Natural killer cell (primary cell): ENCODE measurements at regions of chr13 and their contacts with region 1.

Region 1: DNA sequence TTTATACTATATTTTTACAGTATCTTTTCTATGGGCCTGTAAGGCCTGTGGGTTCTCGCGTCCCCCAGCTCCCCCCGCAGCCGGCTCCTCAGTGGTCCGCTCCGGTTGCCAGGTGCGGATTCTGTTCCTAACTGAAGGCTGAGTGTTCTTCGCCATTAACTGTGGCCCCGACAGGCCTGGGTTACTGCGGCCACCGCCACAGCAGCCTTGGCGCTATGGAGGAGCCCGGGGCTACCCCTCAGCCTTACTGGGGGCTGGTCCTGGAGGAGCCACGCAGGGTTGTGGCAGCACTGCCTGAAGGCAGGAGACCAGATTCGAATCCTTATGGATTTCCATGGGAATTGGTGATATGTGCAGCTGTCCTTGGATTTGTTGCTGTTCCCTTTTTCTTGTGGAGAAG is 45.8 kb downstream of the SPRYD7 start:
- DNase-seq: no peak
- ATAC-seq: no peak
- H3K4me3 ChIP-seq: no peak overlapping the region
- H3K4me3 Mint-ChIP-seq: no peak overlapping the region
- H3K27ac ChIP-seq: no peak overlapping the region
- H3K27ac Mint-ChIP-seq: no peak overlapping the region
- H3K4me1 ChIP-seq: no peaks in the 10 kb centered on the region
- H3K4me1 Mint-ChIP-seq: no peaks in the 10 kb centered on the region
- H3K27me3 ChIP-seq: no peaks in the 10 kb centered on the region
- H3K27me3 Mint-ChIP-seq: peaks cover 0 to 4% of the 10 kb centered on the region in 2 donors
- CTCF ChIP-seq: no peak

Region 2: DNA sequence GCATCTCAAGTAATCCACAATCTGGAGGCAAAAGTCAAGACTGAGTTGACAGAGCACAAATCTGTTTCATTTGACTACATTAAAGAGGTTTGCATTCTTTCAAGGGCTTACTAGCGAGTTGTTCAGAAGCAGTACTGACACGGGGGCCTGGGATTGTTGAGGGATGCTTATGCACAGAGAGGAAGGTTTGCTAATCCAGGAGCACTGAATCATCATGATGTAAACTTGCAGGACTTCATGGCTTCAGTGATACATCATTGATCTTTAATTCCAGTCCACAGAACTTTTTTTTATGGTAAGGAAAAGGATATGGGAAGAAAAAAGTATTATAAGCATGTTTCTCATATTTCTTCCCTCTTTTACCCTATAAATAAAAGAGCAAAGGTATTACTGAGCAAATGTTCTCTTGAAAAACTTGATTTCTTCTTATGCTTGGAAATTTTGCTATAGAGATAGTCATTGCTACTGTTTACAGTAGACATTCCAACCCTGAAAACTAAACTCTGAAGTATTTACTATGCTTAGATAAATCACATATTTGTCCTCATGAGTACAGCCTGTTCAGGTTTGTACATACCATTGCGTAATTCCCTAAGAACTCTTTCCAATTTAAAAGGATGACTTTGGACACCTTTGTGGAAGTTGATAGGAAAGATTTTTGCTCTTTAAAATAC is 32.1 kb before region 1 on chr13:
- intact Hi-C with region 1: loop called (anchors 1 kb)
- DNase-seq: no peak
- ATAC-seq: no peak
- H3K4me3 ChIP-seq: no peak overlapping the region
- H3K4me3 Mint-ChIP-seq: no peak overlapping the region
- H3K27ac ChIP-seq: no peak overlapping the region
- H3K27ac Mint-ChIP-seq: no peak overlapping the region
- H3K4me1 ChIP-seq: no peaks in the 10 kb centered on the region
- H3K4me1 Mint-ChIP-seq: no peaks in the 10 kb centered on the region
- H3K27me3 ChIP-seq: no peaks in the 10 kb centered on the region
- H3K27me3 Mint-ChIP-seq: peaks cover 7 to 20% of the 10 kb centered on the region in 2 donors
- CTCF ChIP-seq: no peak